Activated CD4-positive, alpha-beta T cell treated with anti-CD3 and anti-CD28 coated beads for 36 hours (primary cell): ENCODE measurements at regions of chr20 and their contacts with region 1.

Region 1: GRCh38 chr20:41428285-41428684 is 61.7 kb upstream of the EMILIN3 start:
- DNase-seq: peak; percentile 64
- ATAC-seq: peak; percentile 88
- H3K4me3 Mint-ChIP-seq: peak overlapping the region; percentile 8
- H3K27ac Mint-ChIP-seq: peak overlapping the region; percentile 92
- H3K4me1 Mint-ChIP-seq: peaks cover 65% of the 10 kb centered on the region
- H3K27me3 Mint-ChIP-seq: no peaks in the 10 kb centered on the region

Region 2: GRCh38 chr20:41047975-41048305 is 380.3 kb before region 1 on chr20:
- CTCF ChIA-PET with region 1: no interaction called
- POLR2A ChIA-PET with region 1: no interaction called
- intact Hi-C with region 1: loop called in 1 of 2 experiments (anchors 5 kb)
- DNase-seq: no peak
- ATAC-seq: peak; percentile 46
- H3K4me3 Mint-ChIP-seq: peak overlapping the region; percentile 72
- H3K27ac Mint-ChIP-seq: peak overlapping the region; percentile 87
- H3K4me1 Mint-ChIP-seq: peaks cover 89% of the 10 kb centered on the region
- H3K27me3 Mint-ChIP-seq: no peaks in the 10 kb centered on the region

Region 3: GRCh38 chr20:41150664-41151063 is 277.6 kb before region 1 on chr20:
- CTCF ChIA-PET with region 1: no interaction called
- POLR2A ChIA-PET with region 1: no interaction called
- intact Hi-C with region 1: loop called in 1 of 2 experiments (anchors 5 kb)
- DNase-seq: no peak
- ATAC-seq: peak; percentile 45
- H3K4me3 Mint-ChIP-seq: peak overlapping the region; percentile 3
- H3K27ac Mint-ChIP-seq: peak overlapping the region; percentile 93
- H3K4me1 Mint-ChIP-seq: peaks cover 91% of the 10 kb centered on the region
- H3K27me3 Mint-ChIP-seq: no peaks in the 10 kb centered on the region

Region 4: GRCh38 chr20:41365777-41366598 is 62.3 kb before region 1 on chr20:
- CTCF ChIA-PET with region 1: no interaction called
- POLR2A ChIA-PET with region 1: no interaction called
- intact Hi-C with region 1: no loop called
- DNase-seq: peak; percentile 24
- ATAC-seq: peak; percentile 42
- H3K4me3 Mint-ChIP-seq: no peak overlapping the region
- H3K27ac Mint-ChIP-seq: no peak overlapping the region
- H3K4me1 Mint-ChIP-seq: peaks cover 10% of the 10 kb centered on the region
- H3K27me3 Mint-ChIP-seq: peaks cover 26% of the 10 kb centered on the region

Region 5: DNA sequence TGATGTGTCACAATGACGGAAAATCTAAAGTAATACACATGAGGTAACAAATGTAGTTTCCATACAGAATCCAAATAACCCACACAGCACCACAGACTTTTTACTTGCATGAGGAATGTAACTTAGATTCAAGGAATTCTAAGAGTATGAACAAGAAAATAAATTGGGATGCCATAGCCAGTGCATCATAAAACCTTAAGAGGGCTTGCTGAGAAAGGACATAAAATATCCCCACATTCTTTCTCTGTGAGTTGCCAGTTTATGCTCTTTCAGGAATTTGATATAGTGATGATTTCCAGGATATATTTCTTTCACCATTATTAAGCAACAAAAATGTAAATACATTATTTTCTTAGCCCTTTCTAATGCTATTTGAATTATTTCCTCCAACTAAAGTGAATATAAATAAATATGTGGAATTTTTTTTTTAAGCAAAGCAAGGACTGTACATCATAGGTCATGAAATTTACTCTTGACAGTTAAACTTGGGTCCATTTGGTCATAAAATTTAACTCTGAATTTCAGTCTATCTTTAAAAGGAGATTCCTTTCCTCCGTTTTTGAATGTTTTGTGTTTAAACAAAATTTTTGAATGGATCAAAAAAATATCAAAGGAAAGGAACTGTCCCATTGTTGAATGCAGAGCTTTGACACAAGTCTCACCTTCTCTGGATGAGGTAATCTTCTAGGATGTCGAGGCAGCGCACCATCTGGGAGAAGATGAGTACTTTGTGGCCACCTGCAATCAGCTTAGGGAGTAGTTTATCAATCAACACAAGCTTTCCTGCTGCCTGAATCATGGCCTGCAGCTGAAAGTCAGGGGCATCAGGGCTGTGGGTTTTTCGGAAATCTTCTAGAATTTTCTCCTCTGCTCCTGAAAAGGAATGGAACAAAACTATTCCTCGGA is 54.6 kb after region 1 on chr20:
- CTCF ChIA-PET with region 1: no interaction called
- POLR2A ChIA-PET with region 1: no interaction called
- intact Hi-C with region 1: no loop called
- DNase-seq: no peak
- ATAC-seq: no peak
- H3K4me3 Mint-ChIP-seq: no peak overlapping the region
- H3K27ac Mint-ChIP-seq: no peak overlapping the region
- H3K4me1 Mint-ChIP-seq: peaks cover 32% of the 10 kb centered on the region
- H3K27me3 Mint-ChIP-seq: no peaks in the 10 kb centered on the region